ENCODE measurements at regions of chr16 and their contacts with region 1.

Region 1: DNA sequence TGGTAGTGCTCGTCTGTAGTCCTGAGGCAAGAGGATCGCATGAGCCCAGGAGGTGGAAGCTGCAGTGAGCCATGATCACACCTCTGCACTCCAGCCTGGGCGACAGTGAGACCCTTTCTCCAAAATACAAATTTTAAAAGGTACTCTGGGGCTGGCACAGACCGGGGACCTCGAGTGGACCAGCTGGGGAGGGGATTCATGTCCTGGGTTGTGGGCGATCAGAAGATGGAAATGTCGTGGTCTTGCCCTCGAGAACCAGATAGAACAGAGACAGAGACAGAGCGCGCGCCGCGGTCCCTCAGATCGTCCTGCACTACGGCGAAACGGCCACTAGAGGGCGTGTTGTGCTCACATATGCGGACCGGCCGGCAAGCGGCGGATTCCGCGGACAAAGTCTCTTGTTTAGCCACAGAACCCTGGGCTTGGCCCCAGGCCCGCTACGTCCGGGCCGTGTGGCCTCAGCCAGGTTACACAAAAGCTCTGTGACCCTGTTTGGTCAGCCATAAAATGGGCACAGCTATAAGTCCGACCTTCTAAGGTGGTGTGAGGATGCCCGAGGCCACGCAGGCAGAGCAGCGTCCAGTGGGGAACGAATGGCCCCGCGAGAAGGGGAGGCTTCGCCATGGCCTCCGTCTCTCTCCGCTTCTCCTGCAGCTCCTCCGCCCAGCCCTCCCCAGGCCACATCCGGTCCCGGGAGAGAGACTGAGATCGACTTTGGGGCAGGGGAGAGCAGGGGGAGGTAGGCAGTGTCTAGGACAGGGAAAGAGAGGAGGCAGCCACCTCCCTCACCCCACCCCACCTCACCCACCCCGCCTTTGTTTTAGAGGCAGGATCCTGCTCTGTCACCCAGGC is 14.6 kb upstream of the SBK1 start:
- DNase-seq: peak; percentile 90
- ATAC-seq: peak; percentile 82
- H3K4me3 Mint-ChIP-seq: peak overlapping the region; percentile 68
- H3K27ac Mint-ChIP-seq: peak overlapping the region; percentile 90
- H3K4me1 Mint-ChIP-seq: peaks cover 41% of the 10 kb centered on the region
- H3K27me3 Mint-ChIP-seq: peaks cover 16% of the 10 kb centered on the region

Region 2: DNA sequence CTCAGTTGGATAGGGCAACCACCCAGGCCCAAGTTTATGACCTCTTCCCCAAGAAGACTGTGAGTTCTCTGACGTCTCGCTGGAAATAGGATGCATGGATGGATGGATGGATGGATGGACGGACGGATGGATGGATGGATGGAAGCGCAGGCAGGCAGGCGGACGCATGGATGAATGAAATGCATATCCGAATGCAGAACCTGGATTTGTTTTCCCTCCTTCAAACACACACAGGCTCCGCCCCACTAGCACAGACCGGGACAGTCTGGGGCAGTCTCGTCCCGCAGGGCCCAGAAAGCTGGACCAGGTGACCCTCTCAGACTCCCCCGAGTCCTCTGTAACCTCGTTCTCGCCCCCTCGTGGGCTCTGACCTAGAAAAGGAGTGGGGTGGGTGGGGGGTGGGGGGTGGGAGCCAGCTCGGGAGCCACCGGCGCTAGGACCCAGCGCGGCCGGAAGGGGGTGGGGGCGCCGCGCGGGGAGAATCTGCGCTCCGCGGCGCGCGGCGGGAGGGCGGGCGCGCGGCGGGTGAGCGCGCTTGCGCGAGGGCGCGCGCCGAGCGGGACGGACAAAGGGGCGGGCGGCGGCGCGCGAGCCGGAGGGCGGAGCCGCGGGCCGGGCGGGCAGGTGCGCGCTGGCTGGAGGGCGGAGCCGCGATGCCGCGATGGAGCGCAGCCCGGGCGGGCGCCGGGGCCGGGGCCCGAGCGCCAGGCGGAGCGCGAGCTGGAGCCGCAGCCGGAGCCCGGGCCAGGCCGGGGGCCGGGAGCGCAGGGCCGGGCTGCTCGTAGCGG is 14.3 kb after region 1 on chr16 and contains the start of gene SBK1:
- CTCF ChIA-PET with region 1: interaction called, 15 read pairs
- POLR2A ChIA-PET with region 1: interaction called, 6 read pairs
- DNase-seq: peak; percentile 84
- ATAC-seq: peak; percentile 97
- H3K4me3 Mint-ChIP-seq: peak within 1 kb of the TSS; percentile 83
- H3K27ac Mint-ChIP-seq: peak within 1 kb of the TSS; percentile 82
- H3K4me1 Mint-ChIP-seq: peaks cover 65% of the 10 kb centered on the region
- H3K27me3 Mint-ChIP-seq: peaks cover 5% of the 10 kb centered on the region
- total RNA-seq, gene SBK1: 10.0 to 10.7 TPM

Region 3: DNA sequence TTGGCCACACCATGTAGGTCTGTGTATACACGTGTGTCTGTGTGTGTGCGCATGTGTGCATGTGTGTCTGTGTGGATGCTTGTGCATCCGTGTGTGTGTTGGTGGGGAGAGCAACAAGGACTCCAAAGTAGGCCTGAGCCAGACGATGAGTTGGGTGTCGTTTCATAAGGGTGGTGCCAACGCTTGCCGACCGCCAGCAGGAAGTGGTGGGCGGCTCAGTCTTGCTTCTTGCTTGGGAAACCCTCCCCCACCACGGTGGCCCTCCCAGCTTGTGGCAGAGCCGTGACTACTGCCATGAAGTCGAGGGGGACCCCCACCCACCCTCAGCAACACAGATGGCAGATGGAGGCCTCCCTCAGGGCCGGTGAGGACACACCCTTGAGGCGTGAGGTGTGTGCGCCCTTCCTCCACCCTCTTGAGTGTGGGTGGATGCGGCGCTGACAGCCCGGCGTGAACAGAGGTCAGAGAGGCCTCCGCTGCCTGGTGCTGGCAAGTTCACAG is 32.1 kb after region 1 on chr16:
- CTCF ChIA-PET with region 1: interaction called, 207 read pairs
- POLR2A ChIA-PET with region 1: interaction called, 3 read pairs
- DNase-seq: peak; percentile 92
- ATAC-seq: peak; percentile 92
- H3K4me3 Mint-ChIP-seq: peak overlapping the region; percentile 61
- H3K27ac Mint-ChIP-seq: peak overlapping the region; percentile 93
- H3K4me1 Mint-ChIP-seq: peaks cover 41% of the 10 kb centered on the region
- H3K27me3 Mint-ChIP-seq: no peaks in the 10 kb centered on the region